PC-9 (cell line): ENCODE measurements at regions of chr1 and their contacts with region 1.

Region 1: GRCh38 chr1:169260478-169261151 is 107.0 kb downstream of the NME7 start:
- DNase-seq: no peak
- H3K4me3 ChIP-seq: no peak overlapping the region
- H3K27ac ChIP-seq: no peak overlapping the region
- H3K4me1 ChIP-seq: no peaks in the 10 kb centered on the region
- H3K27me3 ChIP-seq: no peaks in the 10 kb centered on the region
- CTCF ChIP-seq: no peak

Region 2: DNA sequence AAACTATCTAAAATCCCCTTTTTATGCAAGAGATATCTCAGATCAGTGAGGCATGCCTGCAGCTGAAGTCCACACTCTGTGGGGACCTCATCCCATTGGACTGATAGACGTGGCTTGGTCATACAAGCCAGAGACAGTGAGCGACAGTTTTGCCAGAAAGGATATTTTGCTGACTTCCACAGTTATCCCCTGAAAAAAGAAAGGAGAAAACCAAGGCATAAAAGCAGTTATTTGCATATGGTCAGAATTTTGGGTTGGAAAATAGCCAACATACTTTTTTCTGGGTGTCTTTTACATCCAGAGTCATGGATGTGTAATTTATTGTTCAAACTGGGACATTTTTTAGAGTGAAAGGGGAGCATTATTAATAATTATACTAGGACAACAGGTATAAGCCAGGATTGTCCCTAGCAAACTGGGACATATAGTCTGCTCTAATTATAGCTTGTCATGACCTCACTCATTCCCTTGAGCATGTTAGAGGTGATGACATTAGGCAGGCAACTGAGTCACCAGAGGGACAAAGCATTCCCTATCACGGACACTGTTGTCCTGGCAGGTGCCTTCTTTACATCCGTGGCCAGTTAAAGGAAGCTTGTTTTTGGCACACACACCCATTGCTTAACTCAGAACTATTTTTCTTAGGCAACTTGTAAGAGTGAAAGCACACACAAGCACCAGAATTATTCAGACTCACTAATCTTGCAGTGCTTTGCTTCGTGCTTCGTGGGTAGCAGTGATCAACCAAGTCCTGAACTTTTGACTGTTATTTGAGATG is 1468.8 kb after region 1 on chr1:
- CTCF ChIA-PET with region 1: no interaction called
- POLR2A ChIA-PET with region 1: interaction called, 13 read pairs
- intact Hi-C with region 1: no loop called
- DNase-seq: no peak
- H3K4me3 ChIP-seq: no peak overlapping the region
- H3K27ac ChIP-seq: no peak overlapping the region
- H3K4me1 ChIP-seq: no peaks in the 10 kb centered on the region
- H3K27me3 ChIP-seq: no peaks in the 10 kb centered on the region
- CTCF ChIP-seq: no peak